ENCODE measurements at regions of chr2 and their contacts with region 1.

Region 1: DNA sequence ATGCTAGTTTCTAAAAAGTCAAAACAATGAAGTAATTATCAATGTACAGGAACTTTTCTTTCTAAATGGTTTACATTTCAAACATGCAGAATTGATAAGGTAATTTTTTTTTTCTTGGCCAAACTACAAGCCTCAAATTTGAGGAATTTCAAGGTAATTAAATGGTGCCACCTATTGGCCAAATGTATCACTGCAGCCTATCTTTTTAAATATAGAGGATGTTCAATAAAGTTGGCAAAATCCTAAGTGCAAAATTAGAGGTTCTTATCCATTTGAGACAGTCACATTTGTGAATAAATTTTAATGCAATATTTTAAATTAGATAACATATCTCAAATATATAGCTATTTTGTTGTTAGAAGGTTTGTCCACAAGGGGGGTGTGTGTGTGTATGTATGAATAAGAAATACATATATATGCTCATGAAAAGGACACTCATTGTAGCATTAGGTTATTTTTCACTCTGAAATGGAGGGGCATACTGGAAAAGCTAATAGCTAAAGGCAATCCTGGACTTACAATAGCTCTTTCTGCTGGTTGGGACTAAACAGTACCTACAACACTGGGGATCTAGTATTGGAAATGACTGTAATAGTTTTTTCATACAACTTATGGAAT is 26.2 kb downstream of the MMADHC start:
- DNase-seq: peak; percentile 30 to 56 (median 44)
- ATAC-seq: peak; percentile 32; the same call in 2 of the 3 replicates
- H3K4me3 ChIP-seq: no peak overlapping the region
- H3K27ac ChIP-seq: no peak overlapping the region
- H3K4me1 ChIP-seq: no peaks in the 10 kb centered on the region
- H3K27me3 ChIP-seq: peaks cover 0 to 5% of the 10 kb centered on the region in 2 experiments; a peak in 1 of 5 replicates
- CTCF ChIP-seq: peak; percentile 67 to 95 (median 72); a peak in 4 of 6 replicates
- EP300 ChIP-seq: no peak
- POLR2A ChIP-seq: no peak
- RAD21 ChIP-seq: peak; percentile 85

Region 2: GRCh38 chr2:148644883-148645538 is 916.4 kb before region 1 on chr2:
- CTCF ChIA-PET with region 1: no interaction called
- POLR2A ChIA-PET with region 1: no interaction called
- in situ Hi-C with region 1: loop called (anchors 25 kb)
- intact Hi-C with region 1: loop called (anchors 10 kb)
- DNase-seq: peak; percentile 93 to 98 (median 96)
- ATAC-seq: peak; percentile 89
- H3K4me3 ChIP-seq: peak overlapping the region; percentile 82
- H3K27ac ChIP-seq: peak overlapping the region; percentile 93
- H3K4me1 ChIP-seq: peaks cover 14 to 24% of the 10 kb centered on the region in 2 experiments
- H3K27me3 ChIP-seq: no peaks in the 10 kb centered on the region; a peak in 1 of 5 replicates
- CTCF ChIP-seq: peak; percentile 36 to 57 (median 55); a peak in 4 of 6 replicates
- EP300 ChIP-seq: no peak
- POLR2A ChIP-seq: peak; percentile 78
- RAD21 ChIP-seq: peak; percentile 26 to 40; a peak in 3 of 4 replicates

Region 3: GRCh38 chr2:148674063-148675020 is 887.1 kb before region 1 on chr2:
- CTCF ChIA-PET with region 1: no interaction called
- POLR2A ChIA-PET with region 1: no interaction called
- in situ Hi-C with region 1: loop called (anchors 25 kb)
- intact Hi-C with region 1: no loop called
- DNase-seq: peak; percentile 67 to 68 (median 68)
- ATAC-seq: peak; percentile 84
- H3K4me3 ChIP-seq: no peak overlapping the region
- H3K27ac ChIP-seq: no peak overlapping the region
- H3K4me1 ChIP-seq: peaks cover 0 to 7% of the 10 kb centered on the region in 2 experiments; a peak in 1 of 5 replicates
- H3K27me3 ChIP-seq: no peaks in the 10 kb centered on the region
- CTCF ChIP-seq: peak; percentile 60 to 75 (median 67); a peak in 5 of 6 replicates
- EP300 ChIP-seq: no peak
- POLR2A ChIP-seq: no peak
- RAD21 ChIP-seq: peak in 1 of 2 experiments; percentile 47; a peak in 2 of 4 replicates

Region 4: DNA sequence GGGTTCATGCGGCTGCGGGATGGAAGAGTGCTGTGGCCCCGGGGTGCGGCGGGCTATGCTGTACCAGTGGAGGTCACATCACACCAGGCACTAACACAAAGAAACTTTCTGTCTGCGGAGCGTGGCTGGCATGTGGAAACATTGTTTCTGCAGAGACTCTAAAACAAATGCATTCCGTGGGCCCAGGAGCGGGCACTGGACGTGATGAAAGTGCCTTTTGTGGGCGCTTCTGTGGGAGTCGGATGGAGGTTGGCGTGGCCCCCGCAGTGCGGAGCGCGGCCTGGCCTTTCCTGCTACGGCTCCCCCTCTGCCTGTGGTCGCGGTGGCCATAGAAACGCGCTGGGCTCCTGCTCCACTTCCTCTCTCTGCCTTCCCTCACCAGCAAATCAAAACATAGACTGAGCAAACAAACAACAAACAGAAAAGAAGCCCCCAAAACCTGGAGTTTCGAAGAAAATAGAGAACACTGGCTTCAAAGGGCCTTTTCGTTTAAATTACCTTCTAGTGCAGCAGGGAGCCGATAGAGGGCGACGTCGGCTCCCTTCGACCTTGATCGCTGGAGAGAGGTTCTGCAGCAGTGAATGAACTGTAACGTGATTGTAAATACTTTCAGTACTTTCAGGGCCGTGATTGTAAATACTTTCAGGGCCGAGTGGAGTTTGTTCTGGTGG is 635.0 kb before region 1 on chr2:
- CTCF ChIA-PET with region 1: no interaction called
- POLR2A ChIA-PET with region 1: no interaction called
- in situ Hi-C with region 1: no loop called
- intact Hi-C with region 1: loop called (anchors 10 kb)
- DNase-seq: peak; percentile 56 to 77 (median 67)
- ATAC-seq: peak; percentile 94
- H3K4me3 ChIP-seq: no peak overlapping the region
- H3K27ac ChIP-seq: no peak overlapping the region
- H3K4me1 ChIP-seq: peaks cover 0 to 8% of the 10 kb centered on the region in 2 experiments; a peak in 2 of 5 replicates
- H3K27me3 ChIP-seq: 0 out of 5 replicates have a peak, but pooled peaks cover 0 to 3% of the 10 kb centered on the region in 2 experiments
- CTCF ChIP-seq: peak; percentile 81 to 93 (median 88)
- EP300 ChIP-seq: no peak
- POLR2A ChIP-seq: no peak
- RAD21 ChIP-seq: peak; percentile 48 to 69

Region 5: DNA sequence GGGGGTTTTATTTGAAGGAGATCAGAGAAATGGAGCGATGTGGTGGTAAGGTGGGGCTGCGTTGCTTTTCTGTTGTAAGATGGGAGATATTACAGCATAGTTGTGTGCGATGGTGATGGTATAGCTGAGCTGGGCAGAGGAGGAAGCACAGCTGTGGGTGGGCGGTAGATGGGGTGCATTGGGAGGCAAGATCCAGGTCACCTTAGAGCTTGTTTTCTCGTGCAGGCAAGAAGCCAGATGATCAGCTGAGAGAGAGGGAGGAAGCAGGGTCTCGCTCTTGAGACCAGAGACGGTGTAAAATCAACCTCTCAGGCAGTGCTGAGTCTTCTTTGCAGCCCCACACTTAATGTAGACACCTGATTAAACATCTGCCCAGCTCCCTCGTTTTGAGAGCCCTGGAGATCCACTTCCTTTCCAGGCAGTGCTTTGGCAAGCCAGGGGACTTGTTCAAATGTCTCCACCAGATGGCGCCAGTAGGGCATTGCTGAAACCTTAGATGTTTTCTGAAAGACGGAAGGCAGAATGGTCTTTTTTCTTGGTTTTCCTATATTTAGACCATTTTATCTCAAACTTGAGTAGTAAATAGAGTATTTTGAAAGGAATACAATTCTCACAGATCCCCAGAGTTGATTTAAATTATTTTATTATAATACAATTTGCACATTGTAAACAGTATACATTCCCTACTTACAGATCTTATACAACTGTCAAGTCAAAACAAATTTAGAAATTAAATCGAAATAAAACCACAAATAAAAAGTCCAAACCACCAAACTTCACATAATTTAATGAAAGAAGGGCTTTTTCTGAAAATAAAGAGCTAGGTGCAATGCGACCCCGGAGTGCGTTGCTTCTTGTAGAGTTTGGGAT is 544.1 kb before region 1 on chr2:
- CTCF ChIA-PET with region 1: interaction called, 24 read pairs
- POLR2A ChIA-PET with region 1: no interaction called
- in situ Hi-C with region 1: loop called (anchors 5 kb)
- intact Hi-C with region 1: loop called (anchors 1 kb)
- DNase-seq: peak; percentile 82 to 89 (median 87)
- ATAC-seq: peak; percentile 94
- H3K4me3 ChIP-seq: no peak overlapping the region
- H3K27ac ChIP-seq: no peak overlapping the region
- H3K4me1 ChIP-seq: no peaks in the 10 kb centered on the region
- H3K27me3 ChIP-seq: peaks cover 2 to 10% of the 10 kb centered on the region in 2 experiments; a peak in 2 of 5 replicates
- CTCF ChIP-seq: peak; percentile 84 to 93 (median 91)
- EP300 ChIP-seq: no peak
- POLR2A ChIP-seq: no peak
- RAD21 ChIP-seq: peak; percentile 89 to 94

Region 6: GRCh38 chr2:149040451-149040850 is 521.0 kb before region 1 on chr2:
- CTCF ChIA-PET with region 1: interaction called, 4 read pairs
- POLR2A ChIA-PET with region 1: no interaction called
- in situ Hi-C with region 1: no loop called
- intact Hi-C with region 1: loop called (anchors 1 kb)
- DNase-seq: peak; percentile 72 to 79 (median 76)
- ATAC-seq: peak; percentile 88
- H3K4me3 ChIP-seq: no peak overlapping the region
- H3K27ac ChIP-seq: no peak overlapping the region
- H3K4me1 ChIP-seq: peaks cover 0 to 10% of the 10 kb centered on the region in 2 experiments; a peak in 1 of 5 replicates
- H3K27me3 ChIP-seq: peaks cover 4 to 26% of the 10 kb centered on the region in 2 experiments; a peak in 3 of 5 replicates
- CTCF ChIP-seq: peak; percentile 74 to 86 (median 75)
- EP300 ChIP-seq: no peak
- POLR2A ChIP-seq: no peak
- RAD21 ChIP-seq: peak; percentile 11 to 61; a peak in 2 of 4 replicates

Region 7: DNA sequence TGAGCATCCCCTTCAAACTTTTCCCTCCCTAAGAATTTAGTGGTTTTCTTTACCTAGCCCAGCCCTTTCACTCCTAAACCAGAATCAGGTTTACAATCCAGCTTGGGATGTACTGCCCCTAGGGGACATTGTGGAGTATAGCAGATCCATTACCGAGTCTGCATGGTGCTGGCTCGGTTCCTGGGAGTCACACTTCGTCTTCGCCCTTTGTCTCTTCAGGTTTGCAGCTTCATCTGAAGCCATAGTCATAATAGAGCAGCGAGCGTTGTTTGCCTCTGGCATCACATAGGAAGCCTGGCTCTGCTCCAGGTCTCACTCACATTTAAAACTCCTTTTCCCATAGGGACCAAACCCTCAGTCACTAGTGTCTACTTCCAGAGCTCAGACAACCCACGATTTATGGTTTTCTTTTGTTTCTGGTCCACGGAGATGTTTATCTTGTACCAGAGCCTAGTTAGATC is 247.9 kb before region 1 on chr2:
- CTCF ChIA-PET with region 1: no interaction called
- POLR2A ChIA-PET with region 1: no interaction called
- in situ Hi-C with region 1: no loop called
- intact Hi-C with region 1: loop called (anchors 10 kb)
- DNase-seq: peak; percentile 54 to 80 (median 76)
- ATAC-seq: peak; percentile 97
- H3K4me3 ChIP-seq: no peak overlapping the region
- H3K27ac ChIP-seq: no peak overlapping the region
- H3K4me1 ChIP-seq: no peaks in the 10 kb centered on the region
- H3K27me3 ChIP-seq: no peaks in the 10 kb centered on the region
- CTCF ChIP-seq: peak; percentile 66 to 81 (median 68)
- EP300 ChIP-seq: no peak
- POLR2A ChIP-seq: no peak
- RAD21 ChIP-seq: peak; percentile 21 to 48; a peak in 3 of 4 replicates

Region 8: GRCh38 chr2:149420053-149420963 is 141.1 kb before region 1 on chr2:
- CTCF ChIA-PET with region 1: no interaction called
- POLR2A ChIA-PET with region 1: no interaction called
- in situ Hi-C with region 1: no loop called
- intact Hi-C with region 1: no loop called
- DNase-seq: no peak
- ATAC-seq: no peak
- H3K4me3 ChIP-seq: no peak overlapping the region
- H3K27ac ChIP-seq: no peak overlapping the region
- H3K4me1 ChIP-seq: no peaks in the 10 kb centered on the region
- H3K27me3 ChIP-seq: no peaks in the 10 kb centered on the region
- CTCF ChIP-seq: no peak
- EP300 ChIP-seq: no peak
- POLR2A ChIP-seq: no peak
- RAD21 ChIP-seq: no peak

Region 9: GRCh38 chr2:149648282-149649030 is 87.0 kb after region 1 on chr2:
- CTCF ChIA-PET with region 1: no interaction called
- POLR2A ChIA-PET with region 1: no interaction called
- in situ Hi-C with region 1: no loop called
- intact Hi-C with region 1: no loop called
- DNase-seq: peak in 1 of 4 experiments; percentile 3
- ATAC-seq: no peak
- H3K4me3 ChIP-seq: no peak overlapping the region
- H3K27ac ChIP-seq: no peak overlapping the region
- H3K4me1 ChIP-seq: no peaks in the 10 kb centered on the region
- H3K27me3 ChIP-seq: no peaks in the 10 kb centered on the region
- CTCF ChIP-seq: no peak
- EP300 ChIP-seq: no peak
- POLR2A ChIP-seq: no peak
- RAD21 ChIP-seq: no peak

Region 10: DNA sequence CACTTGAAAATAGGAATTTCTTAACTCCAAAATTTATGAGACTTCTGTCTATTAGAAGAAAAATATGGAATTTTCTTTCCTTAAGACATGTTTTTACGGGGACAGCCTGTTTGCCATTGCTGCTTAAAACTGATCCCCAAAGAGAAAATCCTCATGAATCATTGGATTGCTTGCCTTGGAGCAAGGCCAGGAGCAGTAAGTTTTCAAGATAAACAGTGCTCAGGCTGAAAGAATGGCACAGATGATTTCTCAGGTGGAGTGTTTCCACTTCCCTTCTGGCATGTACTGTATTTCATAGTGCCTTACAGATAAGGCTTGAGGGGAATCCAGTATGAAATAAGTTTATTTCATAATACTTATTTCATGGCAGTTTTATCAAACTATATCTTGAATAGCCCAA is 100.4 kb after region 1 on chr2:
- CTCF ChIA-PET with region 1: no interaction called
- POLR2A ChIA-PET with region 1: no interaction called
- in situ Hi-C with region 1: no loop called
- intact Hi-C with region 1: no loop called
- DNase-seq: no peak
- ATAC-seq: no peak
- H3K4me3 ChIP-seq: no peak overlapping the region
- H3K27ac ChIP-seq: no peak overlapping the region
- H3K4me1 ChIP-seq: no peaks in the 10 kb centered on the region
- H3K27me3 ChIP-seq: no peaks in the 10 kb centered on the region
- CTCF ChIP-seq: no peak
- EP300 ChIP-seq: no peak
- POLR2A ChIP-seq: no peak
- RAD21 ChIP-seq: no peak